HepG2 (cell line): ENCODE measurements at regions of chr6 and their contacts with region 1.

Region 1: DNA sequence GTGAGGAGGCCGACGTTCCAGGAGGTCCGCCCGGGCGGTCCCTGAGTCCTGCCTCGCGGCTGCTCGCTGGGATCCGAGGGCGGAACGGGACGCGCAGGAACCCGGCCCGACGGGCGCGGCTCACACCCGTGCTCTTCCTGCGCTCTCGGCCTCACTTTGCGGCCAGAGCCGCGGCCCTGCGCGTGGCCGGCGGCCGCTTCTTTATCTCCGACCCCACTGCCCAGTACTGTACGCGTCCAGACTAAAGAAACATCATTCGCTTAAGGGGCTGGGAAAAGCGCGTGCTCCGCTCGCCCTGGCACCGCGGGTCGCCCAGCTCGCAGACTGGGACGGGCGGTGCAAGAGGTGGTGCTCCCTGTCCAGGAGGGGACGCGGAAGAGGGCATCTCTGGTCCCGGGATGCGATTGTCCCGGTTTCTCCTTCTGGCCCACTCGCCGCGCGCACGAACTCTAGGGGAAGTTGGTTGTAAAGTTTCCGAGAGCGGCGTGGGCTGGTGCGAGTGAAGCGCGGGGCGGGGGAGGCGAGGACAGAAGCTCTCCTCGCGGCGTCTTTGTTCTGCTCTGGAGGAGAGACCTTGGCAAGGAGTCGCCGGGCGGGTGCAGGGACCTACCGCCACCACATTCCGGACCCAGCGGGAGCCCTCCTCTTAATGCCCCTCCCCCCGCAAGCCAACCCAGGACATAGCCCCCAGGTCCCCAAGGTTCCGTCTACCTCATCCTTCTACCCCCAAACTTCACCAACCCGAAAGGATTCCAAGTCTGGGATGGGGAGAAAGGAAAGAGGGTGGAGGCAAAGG is 71.0 kb downstream of the SOX4 start:
- DNase-seq: no peak
- ATAC-seq: peak; percentile 55
- H3K4me3 ChIP-seq: peak overlapping the region in 1 of 3 experiments; percentile 9; a peak in 1 of 6 replicates
- H3K27ac ChIP-seq: no peak overlapping the region
- H3K4me1 ChIP-seq: no peaks in the 10 kb centered on the region
- H3K27me3 ChIP-seq: peaks cover 16 to 54% of the 10 kb centered on the region in 2 experiments
- CTCF ChIP-seq: no peak
- EP300 ChIP-seq: no peak
- POLR2A ChIP-seq: no peak
- RAD21 ChIP-seq: no peak

Region 2: GRCh38 chr6:21694168-21694567 is 29.7 kb after region 1 on chr6:
- CTCF ChIA-PET with region 1: no interaction called
- POLR2A ChIA-PET with region 1: no interaction called
- in situ Hi-C with region 1: no loop called
- intact Hi-C with region 1: loop called (anchors 1 kb)
- DNase-seq: no peak
- ATAC-seq: no peak
- H3K4me3 ChIP-seq: no peak overlapping the region
- H3K27ac ChIP-seq: no peak overlapping the region
- H3K4me1 ChIP-seq: no peaks in the 10 kb centered on the region
- H3K27me3 ChIP-seq: no peaks in the 10 kb centered on the region
- CTCF ChIP-seq: no peak
- EP300 ChIP-seq: no peak
- POLR2A ChIP-seq: no peak
- RAD21 ChIP-seq: no peak

Region 3: DNA sequence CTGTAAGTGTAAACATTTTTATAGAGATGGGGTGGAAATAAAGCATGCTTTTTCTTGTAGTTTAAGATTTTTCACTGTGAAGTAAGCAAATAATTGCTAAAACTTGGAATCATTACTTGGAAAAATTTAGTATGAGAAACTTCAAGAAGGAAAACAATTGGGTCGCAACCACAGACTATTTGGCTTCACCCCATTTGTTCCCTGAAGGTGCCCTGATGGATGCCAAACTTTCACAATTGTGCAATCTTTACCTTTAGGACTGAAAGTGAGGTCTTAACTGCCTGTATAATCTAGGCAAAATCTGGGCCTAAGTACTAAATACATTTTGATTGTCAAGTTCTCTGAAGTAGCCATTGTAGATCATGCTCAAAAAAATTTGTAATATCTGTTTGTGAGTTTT is 1234.9 kb after region 1 on chr6:
- CTCF ChIA-PET with region 1: no interaction called
- POLR2A ChIA-PET with region 1: no interaction called
- in situ Hi-C with region 1: no loop called
- intact Hi-C with region 1: loop called (anchors 5 kb)
- DNase-seq: no peak
- ATAC-seq: no peak
- H3K4me3 ChIP-seq: no peak overlapping the region
- H3K27ac ChIP-seq: no peak overlapping the region
- H3K4me1 ChIP-seq: no peaks in the 10 kb centered on the region
- H3K27me3 ChIP-seq: no peaks in the 10 kb centered on the region
- CTCF ChIP-seq: no peak
- EP300 ChIP-seq: no peak
- POLR2A ChIP-seq: no peak
- RAD21 ChIP-seq: no peak